ENCODE measurements at regions of chr3 and their contacts with region 1.

Region 1: GRCh38 chr3:187164885-187165543 is 25.7 kb upstream of the RPL39L start:
- DNase-seq: peak; percentile 52
- ATAC-seq: peak; percentile 80
- H3K4me3 Mint-ChIP-seq: no peak overlapping the region
- H3K27ac Mint-ChIP-seq: no peak overlapping the region
- H3K4me1 Mint-ChIP-seq: peaks cover under 1% of the 10 kb centered on the region
- H3K27me3 Mint-ChIP-seq: no peaks in the 10 kb centered on the region
- CTCF ChIP-seq: peak; percentile 88

Region 2: GRCh38 chr3:187101184-187102072 is 63.6 kb before region 1 on chr3:
- CTCF ChIA-PET with region 1: interaction called, 20 read pairs
- POLR2A ChIA-PET with region 1: no interaction called
- intact Hi-C with region 1: no loop called
- DNase-seq: peak; percentile 66
- ATAC-seq: peak; percentile 73
- H3K4me3 Mint-ChIP-seq: no peak overlapping the region
- H3K27ac Mint-ChIP-seq: peak overlapping the region; percentile 26
- H3K4me1 Mint-ChIP-seq: peaks cover 29% of the 10 kb centered on the region
- H3K27me3 Mint-ChIP-seq: no peaks in the 10 kb centered on the region
- CTCF ChIP-seq: no peak

Region 3: GRCh38 chr3:187120326-187120725 is 44.7 kb before region 1 on chr3:
- CTCF ChIA-PET with region 1: interaction called, 166 read pairs
- POLR2A ChIA-PET with region 1: no interaction called
- intact Hi-C with region 1: no loop called
- DNase-seq: no peak
- ATAC-seq: no peak
- H3K4me3 Mint-ChIP-seq: no peak overlapping the region
- H3K27ac Mint-ChIP-seq: no peak overlapping the region
- H3K4me1 Mint-ChIP-seq: peaks cover under 1% of the 10 kb centered on the region
- H3K27me3 Mint-ChIP-seq: no peaks in the 10 kb centered on the region
- CTCF ChIP-seq: no peak

Region 4: GRCh38 chr3:187130346-187131066 is 34.5 kb before region 1 on chr3:
- CTCF ChIA-PET with region 1: interaction called, 13 read pairs
- POLR2A ChIA-PET with region 1: interaction called, 4 read pairs
- intact Hi-C with region 1: no loop called
- DNase-seq: peak; percentile 58
- ATAC-seq: peak; percentile 92
- H3K4me3 Mint-ChIP-seq: peak overlapping the region; percentile 49
- H3K27ac Mint-ChIP-seq: peak overlapping the region; percentile 97
- H3K4me1 Mint-ChIP-seq: peaks cover 35% of the 10 kb centered on the region
- H3K27me3 Mint-ChIP-seq: no peaks in the 10 kb centered on the region
- CTCF ChIP-seq: no peak

Region 5: DNA sequence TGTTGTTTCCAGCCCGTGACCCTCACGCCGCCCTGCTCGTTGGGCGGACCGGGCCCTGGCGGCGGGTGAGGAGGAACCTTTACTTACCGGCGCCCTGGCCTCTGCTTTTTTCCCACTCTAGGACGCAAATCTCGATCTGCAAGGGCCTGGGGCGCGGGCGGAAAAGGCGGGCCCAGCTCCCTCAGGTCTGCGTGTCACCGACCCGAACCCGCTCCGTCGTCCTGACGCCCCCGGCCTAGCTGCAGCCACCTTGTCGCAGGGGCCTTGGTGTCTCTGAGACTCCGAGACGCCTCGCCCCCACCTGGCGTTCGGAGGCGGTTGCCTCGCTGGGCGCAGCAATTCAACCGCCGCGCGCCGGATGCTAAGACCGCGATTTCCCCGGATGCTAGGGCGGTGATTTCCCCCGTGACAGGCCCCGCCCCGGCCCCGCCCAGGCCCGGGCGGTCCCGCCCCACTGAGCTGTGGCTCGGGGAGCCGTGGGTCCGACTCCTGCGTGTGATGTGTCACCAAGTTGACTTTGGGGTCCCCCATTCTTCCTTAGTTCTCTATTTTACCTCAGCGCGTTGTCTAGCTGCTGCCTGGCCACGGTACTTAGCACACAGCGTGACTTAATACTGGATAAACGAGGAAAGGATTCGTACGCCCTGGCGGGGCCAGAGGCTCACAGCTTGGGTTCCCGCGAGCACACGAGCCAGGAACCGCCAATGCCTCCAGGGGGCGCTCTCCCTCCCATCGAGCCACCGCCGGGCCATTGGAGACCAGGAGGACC is 25.7 kb before region 1 on chr3 and contains the start of gene RPL39L:
- CTCF ChIA-PET with region 1: interaction called, 62 read pairs
- POLR2A ChIA-PET with region 1: no interaction called
- intact Hi-C with region 1: no loop called
- DNase-seq: peak; percentile 96
- ATAC-seq: peak; percentile 96
- H3K4me3 Mint-ChIP-seq: peak within 1 kb of the TSS; percentile 83
- H3K27ac Mint-ChIP-seq: peak within 1 kb of the TSS; percentile 97
- H3K4me1 Mint-ChIP-seq: peaks cover 19% of the 10 kb centered on the region
- H3K27me3 Mint-ChIP-seq: no peaks in the 10 kb centered on the region
- CTCF ChIP-seq: peak; percentile 97
- total RNA-seq, gene RPL39L: 12.1 to 16.2 TPM